Activated naive CD4-positive, alpha-beta T cell treated with anti-CD3 and anti-CD28 coated beads for 36 hours (primary cell): ENCODE measurements at regions of chr2 and their contacts with region 1.

Region 1: GRCh38 chr2:101697124-101698013 is at the start of gene MAP4K4:
- DNase-seq: peak; percentile 82
- H3K4me3 Mint-ChIP-seq: peak within 1 kb of the TSS; percentile 78
- H3K27ac Mint-ChIP-seq: peak within 1 kb of the TSS; percentile 81
- H3K4me1 Mint-ChIP-seq: peaks cover 33% of the 10 kb centered on the region
- H3K27me3 Mint-ChIP-seq: no peaks in the 10 kb centered on the region
- total RNA-seq, gene MAP4K4: 126 to 131 TPM

Region 2: GRCh38 chr2:101252408-101253012 is 444.9 kb before region 1 on chr2 and contains the start of gene CNOT11:
- CTCF ChIA-PET with region 1: no interaction called
- intact Hi-C with region 1: loop called (anchors 1 kb)
- DNase-seq: peak; percentile 99
- H3K4me3 Mint-ChIP-seq: peak within 1 kb of the TSS; percentile 98
- H3K27ac Mint-ChIP-seq: peak within 1 kb of the TSS; percentile 93
- H3K4me1 Mint-ChIP-seq: peaks cover 39% of the 10 kb centered on the region
- H3K27me3 Mint-ChIP-seq: no peaks in the 10 kb centered on the region
- total RNA-seq, gene CNOT11: 38.3 to 40.3 TPM

Region 3: DNA sequence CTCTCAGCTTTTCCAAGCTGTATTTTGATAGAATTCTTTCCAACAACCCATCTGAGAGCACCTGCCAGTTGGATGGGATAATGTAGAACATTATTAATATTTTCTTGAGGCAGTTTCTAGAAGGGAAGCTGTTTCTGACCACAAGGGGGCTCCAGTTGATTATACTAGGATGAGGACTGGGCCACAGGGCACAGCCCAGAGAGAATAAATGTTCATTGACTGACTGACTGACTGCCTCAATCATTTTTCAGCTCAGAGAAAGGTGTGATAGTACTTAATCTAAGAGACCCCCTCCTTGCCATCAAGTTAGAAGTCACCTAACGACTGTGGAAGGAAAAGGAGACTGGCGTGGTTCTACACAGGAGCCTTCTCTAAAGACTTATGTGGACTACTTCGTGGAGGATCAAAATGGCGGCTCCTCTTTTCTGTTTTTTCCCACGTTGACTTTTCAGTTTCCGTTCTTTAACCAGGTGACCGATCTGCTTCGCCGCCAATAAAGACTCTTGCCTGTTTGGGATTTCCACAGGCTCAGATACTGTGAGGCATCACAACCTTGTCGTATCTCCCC is 278.2 kb before region 1 on chr2:
- CTCF ChIA-PET with region 1: interaction called, 4 read pairs
- intact Hi-C with region 1: loop called (anchors 2 kb)
- DNase-seq: peak; percentile 82
- H3K4me3 Mint-ChIP-seq: no peak overlapping the region
- H3K27ac Mint-ChIP-seq: no peak overlapping the region
- H3K4me1 Mint-ChIP-seq: no peaks in the 10 kb centered on the region
- H3K27me3 Mint-ChIP-seq: no peaks in the 10 kb centered on the region

Region 4: DNA sequence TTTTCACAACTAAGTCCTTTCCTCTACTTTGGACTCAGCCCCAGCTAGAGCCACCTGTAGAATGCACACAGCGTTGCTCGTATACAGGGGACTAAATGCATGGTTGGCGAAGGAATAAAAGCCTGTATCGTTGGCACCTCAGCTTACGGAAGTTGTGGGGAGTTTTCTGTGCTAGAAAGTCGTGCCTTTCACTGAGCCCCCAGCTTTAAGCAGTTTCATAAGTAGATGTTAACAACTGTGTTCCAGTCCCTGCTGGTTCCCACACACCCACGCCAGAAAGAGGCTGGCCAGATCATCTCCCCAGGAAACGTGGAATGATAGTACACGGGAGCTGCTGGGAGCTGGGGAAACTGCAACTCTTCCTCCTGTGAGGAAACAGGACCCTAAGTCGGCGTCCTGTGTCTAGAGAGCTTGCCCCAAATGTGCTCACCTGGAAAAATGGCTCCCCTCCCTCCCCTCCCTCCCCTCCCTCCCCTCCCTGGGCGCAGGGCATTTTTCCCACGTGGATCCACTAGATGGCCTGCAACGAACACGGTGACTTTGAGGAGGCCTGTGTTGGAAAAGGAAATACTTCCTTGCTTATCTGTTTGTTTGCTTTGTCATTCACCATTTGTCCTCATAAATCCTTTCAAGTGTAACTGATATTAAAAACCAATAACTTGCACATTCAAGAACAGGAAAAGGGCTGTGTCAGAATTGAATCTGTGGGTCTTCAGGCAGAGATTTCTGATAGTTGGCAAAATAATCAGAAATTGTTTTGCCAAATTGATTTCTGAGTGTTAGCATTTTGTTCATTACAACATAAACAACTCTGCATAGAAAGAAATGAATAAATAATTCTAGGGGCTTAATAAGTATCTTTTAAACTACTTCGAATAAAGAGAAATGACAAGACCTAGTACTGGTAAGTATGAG is 178.5 kb before region 1 on chr2:
- CTCF ChIA-PET with region 1: no interaction called
- intact Hi-C with region 1: loop called (anchors 5 kb)
- DNase-seq: peak; percentile 43
- H3K4me3 Mint-ChIP-seq: no peak overlapping the region
- H3K27ac Mint-ChIP-seq: no peak overlapping the region
- H3K4me1 Mint-ChIP-seq: peaks cover 47% of the 10 kb centered on the region
- H3K27me3 Mint-ChIP-seq: no peaks in the 10 kb centered on the region

Region 5: GRCh38 chr2:101655702-101656422 is 41.5 kb before region 1 on chr2:
- CTCF ChIA-PET with region 1: no interaction called
- intact Hi-C with region 1: loop called (anchors 1 kb)
- DNase-seq: no peak
- H3K4me3 Mint-ChIP-seq: no peak overlapping the region
- H3K27ac Mint-ChIP-seq: no peak overlapping the region
- H3K4me1 Mint-ChIP-seq: peaks cover 25% of the 10 kb centered on the region
- H3K27me3 Mint-ChIP-seq: no peaks in the 10 kb centered on the region

Region 6: GRCh38 chr2:101710471-101711318 is 13.3 kb after region 1 on chr2:
- CTCF ChIA-PET with region 1: interaction called, 10 read pairs
- intact Hi-C with region 1: loop called (anchors 1 kb)
- DNase-seq: no peak
- H3K4me3 Mint-ChIP-seq: peak overlapping the region; percentile 23
- H3K27ac Mint-ChIP-seq: peak overlapping the region; percentile 59
- H3K4me1 Mint-ChIP-seq: peaks cover 83% of the 10 kb centered on the region
- H3K27me3 Mint-ChIP-seq: no peaks in the 10 kb centered on the region

Region 7: GRCh38 chr2:101717071-101717845 is 19.9 kb after region 1 on chr2:
- CTCF ChIA-PET with region 1: interaction called, 10 read pairs
- intact Hi-C with region 1: loop called (anchors 2 kb)
- DNase-seq: peak; percentile 75
- H3K4me3 Mint-ChIP-seq: peak overlapping the region; percentile 38
- H3K27ac Mint-ChIP-seq: peak overlapping the region; percentile 95
- H3K4me1 Mint-ChIP-seq: peaks cover 92% of the 10 kb centered on the region
- H3K27me3 Mint-ChIP-seq: no peaks in the 10 kb centered on the region